ENCODE measurements at regions of chr21 and their contacts with region 1.

Region 1: GRCh38 chr21:44478124-44478800 is 23.0 kb downstream of the LRRC3 start:
- DNase-seq: no peak
- ATAC-seq: peak; percentile 38

Region 2: GRCh38 chr21:42973991-42974831 is 1504.1 kb before region 1 on chr21 and contains the start of gene PKNOX1:
- intact Hi-C with region 1: no loop called
- DNase-seq: peak; percentile 99
- ATAC-seq: peak; percentile 95
- total RNA-seq, gene PKNOX1: 6.7 TPM

Region 3: GRCh38 chr21:44331650-44332307 is 146.5 kb before region 1 on chr21:
- intact Hi-C with region 1: no loop called
- DNase-seq: no peak
- ATAC-seq: no peak

Region 4: GRCh38 chr21:44353191-44353970 is 124.9 kb before region 1 on chr21 and contains the start of gene TRPM2:
- intact Hi-C with region 1: loop called (anchors 10 kb)
- DNase-seq: peak; percentile 86
- ATAC-seq: peak; percentile 88
- total RNA-seq, gene TRPM2: 1.9 TPM

Region 5: DNA sequence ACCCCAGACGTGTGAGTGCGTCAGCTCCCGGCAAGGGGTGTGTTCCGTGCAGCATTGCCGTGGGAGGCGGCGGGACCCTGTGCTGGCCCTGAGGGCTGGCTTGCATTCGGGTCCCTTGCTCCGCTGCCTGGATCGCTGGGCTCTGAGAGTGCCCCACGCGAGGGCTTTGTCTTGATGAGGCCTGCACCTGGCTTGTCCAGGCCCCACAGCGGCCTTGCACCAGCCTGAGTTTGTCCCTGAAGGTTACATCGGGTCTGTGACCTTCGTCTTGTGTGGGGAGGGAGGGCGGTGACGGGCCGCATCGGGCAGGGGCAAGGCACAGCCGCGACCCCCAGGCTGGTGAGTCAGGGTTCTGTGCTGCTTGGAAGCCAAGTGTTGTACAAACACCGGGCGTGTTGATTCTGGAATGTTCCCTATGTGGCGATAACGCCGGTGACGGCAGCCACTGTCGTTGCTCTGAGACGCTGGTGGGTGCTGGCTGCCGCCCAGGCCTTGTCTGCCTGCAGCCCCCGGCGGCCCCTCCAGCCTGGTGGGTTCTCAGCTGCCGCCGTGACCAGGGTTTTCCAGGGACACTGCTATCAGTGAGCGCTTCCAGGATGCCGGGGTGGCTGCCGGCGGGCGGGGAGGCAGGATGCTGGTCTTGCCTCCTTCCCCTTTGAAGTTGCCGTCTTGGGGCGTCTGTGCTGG is 504.4 kb after region 1 on chr21:
- intact Hi-C with region 1: no loop called
- DNase-seq: peak; percentile 56
- ATAC-seq: peak; percentile 30

Measured in Right ventricle myocardium superior (tissue), 1 donor.